Activated T-helper 2 cell treated with anti-CD3 and anti-CD28 coated beads, Interferon-gamma antibody, Interleukin-2, Interleukin-4, amounts not matched to agents 10 μg/mL and 5 μg/mL and 100 μg/mL, durations not matched to agents 14 hours and 24 hours and 36 hours (primary cell): ENCODE measurements at regions of chr3 and their contacts with region 1.

Region 1: GRCh38 chr3:129278439-129278970 is at the start of gene HMCES:
- DNase-seq: peak; percentile 93
- H3K4me3 Mint-ChIP-seq: peak within 1 kb of the TSS; percentile 98
- H3K27ac Mint-ChIP-seq: peak within 1 kb of the TSS; percentile 96
- H3K4me1 Mint-ChIP-seq: peaks cover 42% of the 10 kb centered on the region
- H3K27me3 Mint-ChIP-seq: no peaks in the 10 kb centered on the region
- total RNA-seq, gene HMCES: 63.6 and 70.7 TPM in 2 replicates

Region 2: GRCh38 chr3:129308636-129309035 is 30.1 kb after region 1 on chr3:
- intact Hi-C with region 1: loop called (anchors 2 kb)
- DNase-seq: no peak
- H3K4me3 Mint-ChIP-seq: no peak overlapping the region
- H3K27ac Mint-ChIP-seq: no peak overlapping the region
- H3K4me1 Mint-ChIP-seq: peaks cover 40% of the 10 kb centered on the region
- H3K27me3 Mint-ChIP-seq: no peaks in the 10 kb centered on the region

Region 3: DNA sequence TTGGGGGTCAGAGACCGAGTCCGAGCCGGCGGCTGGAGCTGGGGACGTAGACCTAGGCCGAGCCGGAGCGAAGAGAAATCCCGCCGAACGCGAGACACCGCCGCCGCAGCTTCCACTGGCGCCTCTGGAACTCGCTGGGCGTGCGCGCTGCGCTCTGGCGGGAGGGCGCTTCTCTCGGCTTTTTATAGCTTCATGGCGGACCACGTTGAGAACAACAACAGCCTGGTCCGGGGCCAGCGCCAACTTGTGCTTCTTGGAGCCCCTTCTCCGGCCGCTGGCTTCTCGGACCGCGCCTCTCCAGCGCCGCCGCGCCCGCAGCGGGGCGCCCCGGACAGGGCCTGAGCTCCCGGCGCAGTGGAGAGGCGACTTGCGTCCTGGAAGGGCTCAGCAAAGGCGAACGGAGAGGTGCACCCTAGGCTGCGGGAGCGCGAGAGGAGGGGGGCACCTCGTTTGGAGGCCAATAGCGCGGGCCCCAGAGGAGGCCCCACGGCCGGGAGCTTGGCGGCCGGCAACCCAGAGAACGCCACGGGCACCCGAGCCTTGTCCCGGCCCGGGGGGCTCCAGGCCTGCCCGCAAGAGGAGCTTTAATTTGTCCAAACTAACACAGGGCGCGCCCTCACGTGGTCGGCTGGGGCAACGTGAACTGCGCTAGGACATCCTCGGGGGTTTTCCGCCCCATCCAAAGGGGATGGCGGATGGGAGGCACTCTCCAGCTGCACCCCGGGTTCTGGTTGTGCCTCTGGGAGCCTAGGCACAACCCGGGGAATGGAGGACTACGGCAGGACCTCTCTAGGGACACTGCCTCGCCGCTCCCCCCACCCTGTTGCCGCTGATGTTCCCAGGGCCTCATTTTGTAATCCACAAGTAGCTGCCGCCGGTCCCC is 37.9 kb after region 1 on chr3:
- intact Hi-C with region 1: loop called (anchors 1 kb)
- DNase-seq: peak; percentile 89
- H3K4me3 Mint-ChIP-seq: peak overlapping the region; percentile 71
- H3K27ac Mint-ChIP-seq: peak overlapping the region; percentile 53
- H3K4me1 Mint-ChIP-seq: peaks cover 16% of the 10 kb centered on the region
- H3K27me3 Mint-ChIP-seq: no peaks in the 10 kb centered on the region